Heart right ventricle (tissue), 16 donors: ENCODE measurements at regions of chr15 and their contacts with region 1.

Region 1: GRCh38 chr15:81225161-81225671 is 28.5 kb downstream of the IL16 start:
- DNase-seq: peak; percentile 55 to 58
- ATAC-seq: peak; percentile 58 to 77 (median 69)
- H3K4me3 ChIP-seq: no peak overlapping the region
- H3K27ac ChIP-seq: peak overlapping the region; percentile 19 to 88 (median 62)
- H3K4me1 ChIP-seq: peaks cover 2 to 48% (median 34%) of the 10 kb centered on the region in 9 donors
- H3K27me3 ChIP-seq: peaks cover 0 to 4% (median 0%) of the 10 kb centered on the region in 7 donors
- CTCF ChIP-seq: no peak

Region 2: DNA sequence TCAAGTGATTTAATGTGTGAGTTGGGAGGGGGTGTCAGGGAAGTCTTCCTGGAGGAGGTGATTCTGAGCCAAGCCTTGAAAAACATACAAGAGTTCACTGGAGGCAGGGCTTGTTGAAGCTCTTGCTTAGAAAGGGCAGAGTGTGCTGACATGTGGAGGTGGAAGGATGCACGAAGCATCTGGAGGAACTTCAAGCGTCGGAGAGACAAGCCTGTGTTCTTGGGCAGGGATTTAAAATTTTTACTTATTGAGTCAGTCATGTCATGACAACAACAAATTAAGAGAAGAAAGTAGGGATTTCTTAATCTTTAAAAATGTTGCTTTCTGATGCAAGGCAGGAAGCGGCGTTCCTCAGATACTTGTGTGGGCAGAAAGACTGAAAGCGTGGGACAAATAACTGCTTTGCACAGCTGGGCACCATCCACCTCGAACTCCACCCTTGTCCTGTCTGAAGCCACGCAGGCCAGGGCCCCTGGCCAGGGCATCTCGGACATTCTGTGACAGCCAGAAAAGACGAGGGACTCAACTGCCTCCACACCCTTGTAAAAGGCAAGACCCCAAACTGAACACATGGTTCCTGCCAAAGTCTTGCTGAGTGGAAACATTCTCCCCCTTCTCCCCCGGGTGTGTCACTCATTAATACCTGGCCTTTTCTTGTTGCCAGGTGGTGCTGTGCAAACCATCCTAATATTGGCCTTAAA is 35.5 kb before region 1 on chr15:
- intact Hi-C with region 1: loop called in 1 of 10 experiments (anchors 1 kb)
- DNase-seq: peak; percentile 45 to 61
- ATAC-seq: peak; percentile 63 to 93 (median 85)
- H3K4me3 ChIP-seq: no peak overlapping the region
- H3K27ac ChIP-seq: peak overlapping the region; percentile 5 to 84 (median 64)
- H3K4me1 ChIP-seq: peaks cover 0 to 2% (median 0%) of the 10 kb centered on the region in 9 donors
- H3K27me3 ChIP-seq: peaks cover 0 to 4% (median 0%) of the 10 kb centered on the region in 7 donors
- CTCF ChIP-seq: no peak

Region 3: DNA sequence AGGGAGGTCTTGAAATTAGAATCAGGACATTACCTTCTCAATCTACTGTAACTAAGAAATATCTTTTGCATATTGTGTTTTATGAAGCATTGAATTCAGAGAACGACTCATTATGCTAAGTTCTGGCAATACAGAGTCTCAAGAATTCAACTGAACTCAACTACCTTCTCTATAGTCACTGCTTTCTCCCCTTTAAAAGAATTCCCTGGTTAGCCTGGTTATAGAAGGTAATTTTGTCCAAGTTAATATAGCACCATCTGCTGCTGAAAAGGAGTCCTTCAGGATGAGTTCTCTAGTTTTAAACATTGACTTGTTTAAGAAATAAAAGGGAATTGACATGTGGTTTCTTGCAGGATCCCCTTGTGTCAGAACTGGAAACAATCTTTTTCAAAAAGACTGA is 31.7 kb after region 1 on chr15:
- intact Hi-C with region 1: loop called in 1 of 10 experiments (anchors 2 kb)
- DNase-seq: no peak
- ATAC-seq: peak in 7 of 8 donors; percentile 55 to 78 (median 65)
- H3K4me3 ChIP-seq: no peak overlapping the region
- H3K27ac ChIP-seq: no peak overlapping the region
- H3K4me1 ChIP-seq: peaks cover 0 to 22% (median 0%) of the 10 kb centered on the region in 9 donors
- H3K27me3 ChIP-seq: peaks cover 0 to 4% (median 0%) of the 10 kb centered on the region in 7 donors
- CTCF ChIP-seq: peak; percentile 12 to 65 (median 56)

Region 4: DNA sequence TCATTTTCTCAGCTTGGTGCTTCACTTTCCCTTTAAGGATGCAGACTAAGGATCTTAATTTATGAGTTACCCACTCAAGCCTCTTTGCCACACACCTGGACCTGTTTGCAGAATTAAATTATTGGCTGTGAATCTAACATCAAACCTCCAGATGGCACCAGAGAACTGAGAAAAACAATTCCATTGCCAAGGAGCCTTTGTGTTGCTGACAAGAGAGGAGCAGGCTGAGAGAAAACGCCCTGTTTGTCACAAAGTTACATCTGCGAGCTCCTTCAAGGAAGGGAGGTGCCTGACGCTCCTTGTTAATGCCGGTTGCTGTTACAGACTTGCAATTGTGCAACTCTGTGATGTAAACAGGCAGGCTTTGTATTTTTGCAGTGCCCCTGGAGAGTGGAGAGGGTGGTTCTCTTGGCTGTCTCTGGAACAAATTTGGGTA is 185.1 kb after region 1 on chr15:
- intact Hi-C with region 1: no loop called
- DNase-seq: peak; percentile 18 to 29
- ATAC-seq: peak; percentile 61 to 96 (median 84)
- H3K4me3 ChIP-seq: no peak overlapping the region
- H3K27ac ChIP-seq: no peak overlapping the region
- H3K4me1 ChIP-seq: peaks cover 0 to 14% (median 8%) of the 10 kb centered on the region in 9 donors
- H3K27me3 ChIP-seq: no peaks in the 10 kb centered on the region
- CTCF ChIP-seq: peak in 8 of 9 donors; percentile 45 to 67 (median 57)